CD8-positive, alpha-beta memory T cell (primary cell): ENCODE measurements at regions of chr10 and their contacts with region 1.

Region 1: DNA sequence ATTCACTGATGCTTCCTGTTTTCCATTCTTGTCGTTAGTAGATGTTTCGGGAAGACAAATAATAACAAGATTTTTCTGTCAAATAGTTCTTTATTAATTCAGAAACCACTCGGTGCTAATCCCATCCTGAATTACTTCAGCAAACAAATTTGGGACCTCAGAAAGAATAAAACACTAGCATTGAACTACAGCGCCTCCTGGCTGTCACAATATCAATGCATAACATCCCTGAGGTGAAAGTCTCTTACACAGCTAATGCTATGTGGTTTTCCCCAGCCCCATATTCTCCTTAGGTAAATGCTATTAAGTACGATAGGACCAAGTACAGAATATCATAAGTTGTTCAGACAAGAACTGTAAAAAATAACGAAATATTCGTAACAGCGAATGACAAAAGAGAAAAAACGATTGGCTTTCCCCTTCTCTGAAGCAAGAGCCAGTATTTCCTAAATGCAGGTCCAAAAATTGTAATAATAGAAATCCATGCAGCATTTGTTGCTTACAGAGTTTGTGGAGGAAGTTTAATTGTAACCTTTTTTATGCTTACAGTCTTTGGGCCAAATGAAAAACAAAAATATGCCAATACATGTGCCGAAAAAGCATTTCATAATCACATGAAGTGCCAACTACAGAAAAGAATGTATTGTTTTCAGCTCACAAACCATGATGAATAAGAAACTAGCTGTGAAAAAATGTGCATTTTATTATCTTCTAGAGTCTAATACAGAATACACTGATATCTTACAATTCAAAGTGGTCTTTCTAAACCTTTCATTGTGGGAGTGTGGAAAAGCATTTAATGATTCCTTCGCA is 47.3 kb downstream of the MYPN start:
- DNase-seq: peak; percentile 41 to 63 (median 46)
- H3K4me3 ChIP-seq: no peak overlapping the region
- H3K4me3 Mint-ChIP-seq: no peak overlapping the region
- H3K27ac ChIP-seq: no peak overlapping the region
- H3K27ac Mint-ChIP-seq: no peak overlapping the region
- H3K4me1 ChIP-seq: no peaks in the 10 kb centered on the region
- H3K4me1 Mint-ChIP-seq: peaks cover 0 to 3% (median 0%) of the 10 kb centered on the region in 3 donors
- H3K27me3 ChIP-seq: no peaks in the 10 kb centered on the region
- H3K27me3 Mint-ChIP-seq: peaks cover 3 to 15% of the 10 kb centered on the region in 2 donors

Region 2: DNA sequence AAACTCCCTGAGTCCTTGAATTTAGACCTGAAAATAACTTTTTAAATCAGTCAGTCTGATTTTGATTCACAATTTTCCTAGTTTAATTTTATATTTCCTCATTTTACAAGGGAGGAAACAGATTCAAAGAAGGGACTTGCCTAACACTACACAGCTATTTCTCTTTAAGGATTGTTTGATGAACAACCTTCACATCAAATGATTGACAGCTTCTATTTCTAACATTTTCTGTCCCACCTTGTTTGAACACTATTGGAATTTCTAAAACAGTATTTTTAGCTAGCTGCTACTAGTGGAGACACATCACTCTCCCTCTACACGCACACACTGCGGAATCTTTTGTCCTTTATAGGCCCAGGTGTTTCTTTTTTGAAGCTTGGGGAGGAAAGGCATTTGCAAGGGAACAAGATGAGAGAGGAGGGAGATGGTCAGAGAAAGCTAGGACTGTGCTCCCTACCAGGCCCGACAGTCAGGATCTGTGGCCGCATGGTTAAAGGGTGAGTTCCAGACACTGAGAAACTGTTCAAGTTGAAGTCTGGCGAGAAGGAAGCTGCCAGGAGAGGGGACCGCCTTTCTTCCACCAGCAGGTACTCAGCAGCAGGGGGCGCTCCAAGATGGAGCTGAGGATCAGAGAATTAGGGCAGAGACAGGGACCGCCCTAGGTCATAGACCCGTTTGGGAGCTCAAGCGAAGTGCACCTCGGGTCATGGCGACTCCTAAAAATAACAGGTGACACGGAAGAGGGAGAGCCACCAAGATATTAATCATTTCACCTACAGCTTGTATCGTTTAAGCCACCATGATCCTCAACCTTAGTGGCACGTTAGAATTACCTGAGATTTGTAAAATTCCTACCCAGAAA is 368.3 kb before region 1 on chr10:
- CTCF ChIA-PET with region 1: interaction called, 16 read pairs
- POLR2A ChIA-PET with region 1: no interaction called
- DNase-seq: peak; percentile 29 to 77 (median 52)
- H3K4me3 ChIP-seq: no peak overlapping the region
- H3K4me3 Mint-ChIP-seq: peak overlapping the region in 1 of 7 donors; percentile 10
- H3K27ac ChIP-seq: no peak overlapping the region
- H3K27ac Mint-ChIP-seq: peak overlapping the region in 2 of 8 donors; percentile 19 to 68
- H3K4me1 ChIP-seq: peaks cover 5% of the 10 kb centered on the region
- H3K4me1 Mint-ChIP-seq: peaks cover 15 to 43% (median 33%) of the 10 kb centered on the region in 3 donors
- H3K27me3 ChIP-seq: no peaks in the 10 kb centered on the region
- H3K27me3 Mint-ChIP-seq: no peaks in the 10 kb centered on the region

Region 3: GRCh38 chr10:67849331-67850011 is 307.1 kb before region 1 on chr10:
- CTCF ChIA-PET with region 1: interaction called, 118 read pairs
- POLR2A ChIA-PET with region 1: no interaction called
- DNase-seq: peak; percentile 83 to 96 (median 85)
- H3K4me3 ChIP-seq: peak overlapping the region; percentile 86
- H3K4me3 Mint-ChIP-seq: peak overlapping the region; percentile 88 to 96 (median 94)
- H3K27ac ChIP-seq: peak overlapping the region; percentile 77
- H3K27ac Mint-ChIP-seq: peak overlapping the region; percentile 79 to 98 (median 96)
- H3K4me1 ChIP-seq: peaks cover 5% of the 10 kb centered on the region
- H3K4me1 Mint-ChIP-seq: peaks cover 8 to 11% (median 10%) of the 10 kb centered on the region in 3 donors
- H3K27me3 ChIP-seq: no peaks in the 10 kb centered on the region
- H3K27me3 Mint-ChIP-seq: peaks cover 0 to 3% of the 10 kb centered on the region in 2 donors